BJ (cell line): ENCODE measurements at regions of chr20 and their contacts with region 1.

Region 1: GRCh38 chr20:31760519-31761240 is 21.6 kb downstream of the TPX2 start:
- DNase-seq: no peak
- H3K4me3 ChIP-seq: no peak overlapping the region
- H3K27me3 ChIP-seq: no peaks in the 10 kb centered on the region
- CTCF ChIP-seq: no peak

Region 2: DNA sequence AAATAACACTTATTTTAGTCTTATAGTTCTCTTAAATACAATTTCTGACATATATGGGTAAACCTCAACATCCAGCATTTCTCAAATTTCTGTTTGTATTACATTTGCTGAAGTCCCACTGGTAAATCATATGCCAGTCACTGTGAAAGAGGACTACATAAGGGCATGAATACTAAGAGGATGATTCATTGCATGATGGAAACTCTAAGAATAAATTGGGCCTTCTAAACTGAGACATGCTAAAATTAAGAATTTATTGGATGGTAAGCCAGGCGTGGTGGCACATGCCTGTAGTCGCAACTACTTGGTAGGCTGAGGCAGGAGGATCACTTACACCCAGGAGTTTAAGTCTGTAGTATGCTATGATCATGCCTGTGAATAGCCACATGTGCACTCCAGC is 308.1 kb before region 1 on chr20:
- CTCF ChIA-PET with region 1: no interaction called
- POLR2A ChIA-PET with region 1: no interaction called
- DNase-seq: no peak
- H3K4me3 ChIP-seq: no peak overlapping the region
- H3K27me3 ChIP-seq: no peaks in the 10 kb centered on the region
- CTCF ChIP-seq: no peak

Region 3: GRCh38 chr20:31738729-31739561 is 21.7 kb before region 1 on chr20 and contains the start of gene TPX2:
- CTCF ChIA-PET with region 1: no interaction called
- POLR2A ChIA-PET with region 1: interaction called, 17 read pairs
- DNase-seq: peak; percentile 90
- H3K4me3 ChIP-seq: peak within 1 kb of the TSS; percentile 63
- H3K27me3 ChIP-seq: no peaks in the 10 kb centered on the region
- CTCF ChIP-seq: peak; percentile 31; the same call in 1 of the 2 replicates
- polyA plus RNA-seq, gene TPX2: 29.9 and 39.2 TPM in 2 replicates